Activated B cell treated with CpG ODN at 0.5 μM for 24 hours (primary cell): ENCODE measurements at regions of chr15 and their contacts with region 1.

Region 1: GRCh38 chr15:74787251-74788041 is 5.6 kb downstream of the CSK start:
- DNase-seq: peak; percentile 82
- ATAC-seq: peak; percentile 60
- H3K4me3 Mint-ChIP-seq: peak overlapping the region; percentile 89
- H3K27ac Mint-ChIP-seq: peak overlapping the region; percentile 99
- H3K4me1 Mint-ChIP-seq: peaks cover 90% of the 10 kb centered on the region
- H3K27me3 Mint-ChIP-seq: no peaks in the 10 kb centered on the region
- CTCF ChIP-seq: no peak

Region 2: DNA sequence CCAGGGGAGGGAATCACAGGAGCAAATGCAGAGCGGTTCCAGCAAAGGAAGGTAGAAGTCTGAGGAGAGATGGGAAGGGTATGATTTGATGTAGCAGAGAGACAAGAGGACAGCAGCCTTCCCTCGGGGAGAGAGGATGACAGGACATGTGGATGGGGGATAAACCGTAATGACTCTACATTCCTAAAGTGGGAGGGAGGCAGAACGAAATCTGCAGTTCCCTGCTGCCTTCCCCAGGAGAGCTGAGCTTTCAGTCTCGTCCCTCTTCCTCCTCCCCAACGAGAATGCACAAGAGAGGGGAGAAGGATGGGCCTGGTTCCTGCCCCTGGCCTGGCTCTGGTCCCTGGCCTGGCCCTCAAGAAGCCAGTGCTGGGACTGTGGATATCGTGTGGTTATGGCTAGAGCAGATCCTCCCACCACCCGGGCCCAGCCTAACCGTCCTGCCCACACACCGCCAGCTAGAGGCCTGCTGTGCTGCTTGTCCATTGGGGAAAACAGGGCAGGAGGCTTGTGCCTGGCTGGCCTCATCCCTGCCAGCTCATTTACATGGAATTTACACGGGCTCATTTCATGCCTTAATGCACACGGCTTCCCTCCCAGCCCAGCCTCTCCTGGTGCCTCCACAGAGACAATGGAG is 380.3 kb before region 1 on chr15:
- CTCF ChIA-PET with region 1: no interaction called
- POLR2A ChIA-PET with region 1: interaction called, 21 read pairs
- intact Hi-C with region 1: no loop called
- DNase-seq: no peak
- ATAC-seq: no peak
- H3K4me3 Mint-ChIP-seq: no peak overlapping the region
- H3K27ac Mint-ChIP-seq: peak overlapping the region; percentile 30
- H3K4me1 Mint-ChIP-seq: peaks cover 70% of the 10 kb centered on the region
- H3K27me3 Mint-ChIP-seq: no peaks in the 10 kb centered on the region
- CTCF ChIP-seq: no peak

Region 3: DNA sequence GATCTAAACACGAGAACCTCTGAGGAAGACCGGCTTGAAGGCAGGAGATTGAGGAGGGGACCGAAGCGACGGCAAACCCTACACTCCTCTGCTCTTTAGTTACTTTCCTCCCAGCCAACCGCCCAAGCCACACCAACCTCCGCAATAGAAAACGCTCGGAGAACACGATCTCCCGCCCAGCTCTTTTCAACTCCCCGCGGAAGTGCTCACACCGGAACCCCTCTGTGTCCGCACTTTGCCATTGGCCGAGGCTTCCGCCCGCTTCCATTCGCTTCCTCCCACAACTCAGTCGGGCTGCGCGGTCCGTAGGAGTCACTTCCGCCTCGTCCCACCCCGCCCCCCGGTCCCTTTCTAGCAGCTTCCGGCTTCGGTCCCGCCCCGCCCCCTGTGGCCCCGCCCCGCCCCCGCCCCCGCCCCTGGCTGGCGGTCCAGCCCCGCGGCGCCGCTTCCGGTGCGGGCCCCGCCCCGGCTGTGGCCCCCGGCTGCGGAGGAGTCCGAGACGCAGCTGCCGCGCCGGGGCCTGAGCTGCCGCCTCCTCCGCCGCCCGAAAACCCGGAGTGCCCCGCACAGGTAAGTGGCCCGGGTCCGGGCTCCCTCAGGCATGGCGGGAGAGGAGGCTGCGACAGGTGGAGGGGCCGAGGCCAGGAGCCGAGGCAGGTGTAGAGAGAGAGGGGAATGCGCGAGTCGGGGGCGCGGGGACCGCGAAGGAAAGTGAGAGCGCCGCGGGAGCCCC is 246.5 kb before region 1 on chr15 and contains the start of gene ARID3B:
- CTCF ChIA-PET with region 1: no interaction called
- POLR2A ChIA-PET with region 1: no interaction called
- intact Hi-C with region 1: loop called (anchors 5 kb)
- DNase-seq: peak; percentile 79
- ATAC-seq: peak; percentile 86
- H3K4me3 Mint-ChIP-seq: peak within 1 kb of the TSS; percentile 98
- H3K27ac Mint-ChIP-seq: peak within 1 kb of the TSS; percentile 95
- H3K4me1 Mint-ChIP-seq: peaks cover 49% of the 10 kb centered on the region
- H3K27me3 Mint-ChIP-seq: no peaks in the 10 kb centered on the region
- CTCF ChIP-seq: no peak
- total RNA-seq, gene ARID3B: 24.8 and 26.9 TPM in 2 replicates

Region 4: GRCh38 chr15:74716644-74717043 is 70.8 kb before region 1 on chr15:
- CTCF ChIA-PET with region 1: no interaction called
- POLR2A ChIA-PET with region 1: no interaction called
- intact Hi-C with region 1: no loop called
- DNase-seq: no peak
- ATAC-seq: no peak
- H3K4me3 Mint-ChIP-seq: no peak overlapping the region
- H3K27ac Mint-ChIP-seq: no peak overlapping the region
- H3K4me1 Mint-ChIP-seq: no peaks in the 10 kb centered on the region
- H3K27me3 Mint-ChIP-seq: no peaks in the 10 kb centered on the region
- CTCF ChIP-seq: no peak

Region 5: GRCh38 chr15:74857082-74857655 is 69.7 kb after region 1 on chr15:
- CTCF ChIA-PET with region 1: no interaction called
- POLR2A ChIA-PET with region 1: interaction called, 11 read pairs
- intact Hi-C with region 1: no loop called
- DNase-seq: no peak
- ATAC-seq: peak; percentile 72
- H3K4me3 Mint-ChIP-seq: peak overlapping the region; percentile 44
- H3K27ac Mint-ChIP-seq: peak overlapping the region; percentile 83
- H3K4me1 Mint-ChIP-seq: peaks cover 52% of the 10 kb centered on the region
- H3K27me3 Mint-ChIP-seq: no peaks in the 10 kb centered on the region
- CTCF ChIP-seq: no peak